CD14-positive monocyte (primary cell): ENCODE measurements at regions of chr5 and their contacts with region 1.

Region 1: GRCh38 chr5:64784451-64785025 is 15.8 kb downstream of the CWC27 start:
- DNase-seq: peak; percentile 61 to 80 (median 74)
- H3K4me3 ChIP-seq: no peak overlapping the region
- H3K4me3 Mint-ChIP-seq: no peak overlapping the region
- H3K27ac ChIP-seq: no peak overlapping the region
- H3K27ac Mint-ChIP-seq: no peak overlapping the region
- H3K4me1 ChIP-seq: no peaks in the 10 kb centered on the region
- H3K4me1 Mint-ChIP-seq: peaks cover 7% of the 10 kb centered on the region
- H3K27me3 ChIP-seq: no peaks in the 10 kb centered on the region
- H3K27me3 Mint-ChIP-seq: peaks cover 0 to 2% (median 0%) of the 10 kb centered on the region in 3 donors
- CTCF ChIP-seq: peak; percentile 91

Region 2: DNA sequence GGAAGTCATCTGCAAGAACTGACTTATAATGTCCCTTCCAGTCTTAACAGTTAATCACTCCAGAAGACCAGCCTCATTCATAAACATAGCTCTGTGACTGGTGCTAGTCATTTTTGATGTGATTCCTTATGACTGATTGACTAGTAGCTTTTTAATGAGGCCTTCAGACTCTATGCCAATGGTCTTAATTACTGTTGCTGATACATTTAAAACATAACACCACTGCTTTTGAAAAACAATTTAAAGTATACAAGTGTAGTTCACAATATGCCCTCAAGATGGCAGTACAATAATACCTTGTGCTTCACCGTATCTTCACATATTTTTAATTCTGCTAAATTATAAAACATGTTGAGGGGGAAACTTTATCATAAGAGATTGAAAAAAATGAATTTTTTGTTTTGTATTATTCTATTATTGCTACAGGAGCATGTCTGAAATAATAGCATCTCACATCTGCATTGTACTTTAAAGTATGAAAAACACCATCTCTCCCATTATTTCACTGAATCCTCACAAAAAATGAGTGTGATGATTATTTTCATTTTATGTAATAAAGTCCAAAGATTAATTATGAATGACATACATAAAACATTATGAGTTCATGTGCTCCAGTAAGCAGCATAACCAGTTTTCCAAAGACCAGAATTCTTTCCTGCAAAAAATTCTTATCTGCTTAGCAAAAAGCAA is 149.4 kb before region 1 on chr5:
- intact Hi-C with region 1: loop called (anchors 5 kb)
- DNase-seq: peak in 2 of 3 donors; percentile 8 to 25
- H3K4me3 ChIP-seq: no peak overlapping the region
- H3K4me3 Mint-ChIP-seq: no peak overlapping the region
- H3K27ac ChIP-seq: no peak overlapping the region
- H3K27ac Mint-ChIP-seq: no peak overlapping the region
- H3K4me1 ChIP-seq: peaks cover 4 to 7% of the 10 kb centered on the region in 2 donors
- H3K4me1 Mint-ChIP-seq: peaks cover 6% of the 10 kb centered on the region
- H3K27me3 ChIP-seq: no peaks in the 10 kb centered on the region
- H3K27me3 Mint-ChIP-seq: peaks cover 1 to 9% (median 4%) of the 10 kb centered on the region in 3 donors
- CTCF ChIP-seq: peak; percentile 89

Region 3: DNA sequence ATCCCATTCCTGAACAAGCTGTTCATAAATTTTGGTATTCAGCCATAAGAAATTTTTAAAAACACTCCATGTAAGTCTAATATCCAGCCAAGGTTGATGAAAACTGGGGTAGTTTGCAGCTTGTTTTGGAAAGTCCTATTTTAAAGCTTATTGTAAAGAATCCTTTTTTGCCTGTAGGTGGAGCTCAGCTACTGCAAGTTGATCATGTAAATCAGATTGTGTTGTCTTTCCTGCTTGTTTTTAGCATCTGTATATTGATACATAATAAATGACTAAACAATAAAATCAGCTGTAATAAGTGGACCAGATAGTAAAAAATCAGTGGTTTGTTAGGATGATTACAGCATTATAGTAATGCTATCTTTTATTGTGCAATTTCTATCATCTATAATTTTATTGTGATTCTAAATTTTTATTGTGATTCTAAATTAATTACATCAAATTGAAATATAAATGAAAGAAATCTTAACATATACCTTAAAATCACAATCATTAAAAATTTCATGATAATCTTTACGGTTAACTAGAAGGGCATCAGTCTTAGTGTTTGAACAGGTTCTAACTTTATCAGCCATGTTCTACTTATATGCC is 26.6 kb after region 1 on chr5:
- intact Hi-C with region 1: no loop called
- DNase-seq: peak; percentile 10 to 28 (median 27)
- H3K4me3 ChIP-seq: no peak overlapping the region
- H3K4me3 Mint-ChIP-seq: no peak overlapping the region
- H3K27ac ChIP-seq: no peak overlapping the region
- H3K27ac Mint-ChIP-seq: no peak overlapping the region
- H3K4me1 ChIP-seq: no peaks in the 10 kb centered on the region
- H3K4me1 Mint-ChIP-seq: no peaks in the 10 kb centered on the region
- H3K27me3 ChIP-seq: no peaks in the 10 kb centered on the region
- H3K27me3 Mint-ChIP-seq: no peaks in the 10 kb centered on the region
- CTCF ChIP-seq: peak; percentile 64